ENCODE measurements at regions of chrX and their contacts with region 1.

Region 1: DNA sequence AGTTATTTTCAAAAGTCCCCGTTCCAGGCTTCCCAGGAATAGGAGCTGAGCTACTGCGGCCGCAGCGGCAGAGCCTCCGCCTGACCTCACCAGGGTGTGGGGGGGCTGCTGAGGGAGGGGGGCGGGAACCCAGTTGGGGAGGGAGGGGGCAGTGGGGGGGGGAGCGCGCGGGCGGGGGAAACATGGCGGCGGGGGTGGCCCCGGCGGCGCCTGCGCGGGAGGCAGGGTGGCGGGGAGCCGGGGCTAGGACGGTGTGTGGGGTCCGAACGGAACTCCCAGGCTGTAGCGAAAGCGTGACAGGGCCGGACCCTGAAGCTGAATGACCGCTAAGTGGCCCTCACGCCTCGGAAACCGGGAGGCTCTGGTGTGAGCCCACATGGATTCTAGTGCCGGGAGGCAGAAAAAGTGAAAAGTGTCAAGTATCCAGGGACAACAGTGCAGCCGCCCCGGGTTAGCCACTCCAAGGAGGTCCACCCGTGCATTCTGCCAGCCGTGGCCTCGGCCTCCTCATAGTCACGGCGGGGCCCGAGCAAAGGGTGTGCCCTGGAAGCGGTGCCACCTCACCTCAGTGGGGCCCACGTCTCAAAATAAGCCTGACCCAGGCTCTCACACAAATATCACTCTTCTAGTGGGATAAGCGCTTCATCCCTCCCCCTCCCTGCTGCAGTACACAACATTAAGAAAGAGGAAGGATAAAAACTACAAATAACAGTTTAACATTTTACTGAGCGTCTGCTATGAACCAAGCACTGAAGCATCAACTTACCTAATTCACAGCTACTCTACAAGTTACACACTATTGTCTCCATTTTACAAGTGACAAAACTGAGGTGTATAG is at the start of gene KLHL13:
- DNase-seq: peak; percentile 18
- ATAC-seq: peak; percentile 84
- H3K4me3 ChIP-seq: peak within 1 kb of the TSS; percentile 84
- H3K27ac ChIP-seq: peak within 1 kb of the TSS; percentile 83
- H3K4me1 ChIP-seq: 0 out of 2 replicates have a peak, but pooled peaks cover 2% of the 10 kb centered on the region
- H3K27me3 ChIP-seq: no peaks in the 10 kb centered on the region
- CTCF ChIP-seq: no peak
- POLR2A ChIP-seq: no peak
- RAD21 ChIP-seq: no peak
- total RNA-seq, gene KLHL13: 12.5 and 13.6 TPM in 2 replicates

Region 2: GRCh38 chrX:117860517-117860916 is 256.4 kb before region 1 on chrX:
- CTCF ChIA-PET with region 1: no interaction called
- POLR2A ChIA-PET with region 1: no interaction called
- dilution Hi-C with region 1: no loop called
- in situ Hi-C with region 1: no loop called
- intact Hi-C with region 1: no loop called
- DNase-seq: no peak
- ATAC-seq: no peak
- H3K4me3 ChIP-seq: no peak overlapping the region
- H3K27ac ChIP-seq: no peak overlapping the region
- H3K4me1 ChIP-seq: no peaks in the 10 kb centered on the region
- H3K27me3 ChIP-seq: no peaks in the 10 kb centered on the region
- CTCF ChIP-seq: no peak
- POLR2A ChIP-seq: no peak
- RAD21 ChIP-seq: no peak

Region 3: GRCh38 chrX:118226090-118226428 is 109.1 kb after region 1 on chrX:
- CTCF ChIA-PET with region 1: no interaction called
- POLR2A ChIA-PET with region 1: no interaction called
- dilution Hi-C with region 1: no loop called
- in situ Hi-C with region 1: no loop called
- intact Hi-C with region 1: loop called (anchors 10 kb)
- DNase-seq: no peak
- ATAC-seq: peak; percentile 67
- H3K4me3 ChIP-seq: no peak overlapping the region
- H3K27ac ChIP-seq: no peak overlapping the region
- H3K4me1 ChIP-seq: no peaks in the 10 kb centered on the region
- H3K27me3 ChIP-seq: no peaks in the 10 kb centered on the region
- CTCF ChIP-seq: peak; percentile 52
- POLR2A ChIP-seq: no peak
- RAD21 ChIP-seq: peak; percentile 63

Region 4: DNA sequence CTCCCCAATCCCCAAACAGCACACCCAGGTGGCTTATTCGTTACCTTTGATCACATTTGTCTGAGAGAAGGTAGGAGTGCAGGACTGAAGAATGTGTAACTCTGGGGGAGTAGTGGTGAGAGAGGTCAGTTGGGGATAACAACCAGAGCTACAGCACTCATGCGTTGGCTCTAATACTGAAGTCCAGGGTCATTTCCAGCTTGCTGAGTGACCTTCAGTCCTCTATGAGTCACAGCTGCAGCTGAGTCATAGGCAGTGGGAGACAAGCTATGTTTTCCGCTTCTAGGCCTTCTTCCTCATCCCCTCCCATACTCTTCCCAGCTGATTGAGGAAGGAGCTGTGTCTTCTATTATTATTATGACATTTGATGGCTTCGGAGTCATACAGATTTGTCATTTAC is 924.2 kb after region 1 on chrX:
- CTCF ChIA-PET with region 1: no interaction called
- POLR2A ChIA-PET with region 1: no interaction called
- dilution Hi-C with region 1: no loop called
- in situ Hi-C with region 1: no loop called
- intact Hi-C with region 1: no loop called
- DNase-seq: peak; percentile 88
- ATAC-seq: peak; percentile 90
- H3K4me3 ChIP-seq: no peak overlapping the region
- H3K27ac ChIP-seq: peak overlapping the region; percentile 39; the same call in 1 of the 2 replicates
- H3K4me1 ChIP-seq: peaks cover 3% of the 10 kb centered on the region; the same call in 1 of the 2 replicates
- H3K27me3 ChIP-seq: no peaks in the 10 kb centered on the region
- CTCF ChIP-seq: no peak
- POLR2A ChIP-seq: no peak
- RAD21 ChIP-seq: no peak

Measured in IMR-90 (cell line).